ENCODE measurements at regions of chr11 and their contacts with region 1.

Region 1: DNA sequence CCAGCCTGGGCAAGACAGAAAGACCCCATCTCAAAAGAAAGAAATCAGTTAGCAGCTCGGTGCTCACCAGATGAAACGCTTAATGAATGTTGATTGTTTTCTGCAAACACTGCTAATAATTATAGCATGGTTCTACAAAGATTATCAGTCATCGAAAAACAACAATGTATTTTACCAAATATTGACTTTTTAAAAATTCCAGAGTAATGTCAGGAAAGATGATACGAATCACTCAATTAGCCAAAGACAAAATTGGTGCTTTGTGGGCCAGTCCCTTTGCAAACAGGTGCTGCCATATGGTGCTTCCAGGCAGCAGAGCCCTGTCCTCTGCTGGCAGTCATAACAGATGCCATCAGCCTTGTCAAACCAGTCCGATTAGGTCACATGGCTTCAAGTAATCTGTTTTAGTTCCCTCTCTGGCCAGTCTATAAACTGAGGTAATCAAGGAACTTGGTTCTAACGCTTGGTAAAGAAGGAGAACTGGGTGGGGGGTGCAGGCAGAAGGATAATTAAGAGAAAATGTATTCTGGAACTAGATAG is 49.2 kb upstream of the CAPRIN1 start:
- DNase-seq: peak in 1 of 6 donors; percentile 6
- ATAC-seq: peak; percentile 62 to 82 (median 78)
- H3K4me3 ChIP-seq: no peak overlapping the region
- H3K27ac ChIP-seq: no peak overlapping the region
- H3K4me1 ChIP-seq: no peaks in the 10 kb centered on the region
- H3K27me3 ChIP-seq: no peaks in the 10 kb centered on the region
- CTCF ChIP-seq: no peak

Region 2: GRCh38 chr11:34161812-34162499 is 159.6 kb after region 1 on chr11:
- intact Hi-C with region 1: loop called in 1 of 3 experiments (anchors 10 kb)
- DNase-seq: peak in 1 of 6 donors; percentile 64
- ATAC-seq: no peak
- H3K4me3 ChIP-seq: no peak overlapping the region
- H3K27ac ChIP-seq: no peak overlapping the region
- H3K4me1 ChIP-seq: no peaks in the 10 kb centered on the region
- H3K27me3 ChIP-seq: no peaks in the 10 kb centered on the region
- CTCF ChIP-seq: no peak

Measured in pancreas (tissue), 10 donors.